ENCODE measurements at regions of chr7 and their contacts with region 1.

Region 1: GRCh38 chr7:88614736-88615135 is 144.8 kb upstream of the ZNF804B start:
- DNase-seq: no peak

Region 2: DNA sequence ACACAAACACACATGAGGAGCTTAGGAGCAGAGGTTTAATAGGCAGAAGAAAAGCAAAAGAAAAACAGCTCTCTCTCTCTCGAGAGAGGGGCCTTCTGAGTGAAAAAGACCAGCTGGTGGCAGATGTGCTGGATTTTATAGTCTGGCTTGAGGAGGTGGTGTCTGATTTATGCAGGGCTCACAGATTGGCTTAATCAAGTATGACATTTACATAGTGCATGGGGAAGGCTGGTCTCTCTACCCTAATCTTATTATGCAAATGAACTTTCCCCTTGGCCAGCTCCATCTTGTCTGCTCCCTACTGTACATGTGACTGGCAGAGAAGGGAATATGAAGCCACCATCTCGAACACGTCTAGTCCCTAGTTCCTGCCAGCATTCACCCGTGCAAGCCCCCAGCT is 74.7 kb before region 1 on chr7:
- intact Hi-C with region 1: loop called in 1 of 2 experiments (anchors 2 kb)
- DNase-seq: no peak

Region 3: DNA sequence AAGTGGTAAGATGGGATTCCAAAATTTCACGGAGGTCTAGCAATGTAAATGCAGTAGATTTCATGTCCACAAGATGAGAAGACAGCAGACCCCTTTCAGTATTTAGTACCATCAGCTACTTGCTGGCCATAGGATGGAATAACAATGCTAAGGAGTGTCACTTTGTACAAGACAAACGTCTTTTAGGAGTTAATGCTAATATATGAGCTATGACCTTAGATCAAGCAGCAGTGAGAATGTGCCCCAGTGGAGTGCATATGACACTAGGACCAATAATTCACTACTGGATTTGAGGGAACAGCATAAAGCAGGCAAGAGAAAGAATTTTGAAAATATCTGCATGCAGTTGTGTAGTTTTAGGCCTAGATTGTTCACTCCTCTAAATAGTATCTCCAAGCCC is 38.0 kb before region 1 on chr7:
- intact Hi-C with region 1: no loop called
- DNase-seq: no peak

Region 4: GRCh38 chr7:88589927-88590326 is 24.8 kb before region 1 on chr7:
- intact Hi-C with region 1: no loop called
- DNase-seq: no peak

Region 5: DNA sequence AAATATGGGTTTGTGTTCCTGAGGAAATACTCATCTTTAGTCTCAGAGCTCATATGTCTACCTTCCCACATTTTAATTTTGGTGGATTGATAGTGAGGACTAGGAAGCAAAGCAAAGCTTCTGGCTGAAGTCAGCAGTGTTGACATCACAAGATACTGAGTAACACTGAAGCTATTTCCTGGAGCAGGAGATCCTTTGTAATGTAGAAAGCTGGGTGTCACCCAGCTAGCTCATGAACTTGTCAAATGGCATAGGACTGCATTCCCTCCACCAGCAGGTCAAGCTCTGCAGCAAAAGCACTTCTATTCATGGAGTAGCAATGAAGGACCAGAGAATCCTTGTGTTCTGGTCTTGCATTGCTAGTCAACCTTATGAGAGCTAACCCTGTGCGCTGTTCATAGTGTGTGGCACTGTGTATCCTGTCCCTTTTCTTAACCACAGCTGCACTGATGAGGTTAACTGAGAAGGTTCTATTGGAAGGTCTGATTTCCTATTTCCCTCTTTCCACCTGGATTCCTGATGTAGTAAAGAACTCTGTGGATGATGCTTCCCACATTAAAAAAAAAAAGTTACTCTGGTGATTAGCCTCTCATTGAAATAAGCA is 50.0 kb after region 1 on chr7:
- intact Hi-C with region 1: no loop called
- DNase-seq: no peak

Region 6: DNA sequence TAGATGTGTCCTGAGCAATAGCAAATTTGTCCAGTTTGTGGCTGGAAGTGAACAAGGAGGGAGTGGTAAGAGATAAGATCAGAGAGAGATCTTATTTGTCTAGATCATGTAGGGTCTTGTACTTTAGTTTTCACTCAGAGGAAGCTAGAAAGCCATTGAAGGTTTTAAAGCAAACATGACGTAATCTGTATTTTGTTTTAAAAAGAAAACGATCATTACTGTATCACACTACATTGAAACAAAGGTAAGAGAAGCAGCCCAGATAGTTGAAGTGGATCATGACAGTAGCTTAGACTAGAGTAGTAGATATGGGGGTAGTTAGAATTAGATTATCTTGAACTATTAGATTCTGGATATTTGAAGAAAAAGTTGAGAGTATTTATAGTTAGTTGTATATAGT is 121.2 kb after region 1 on chr7:
- intact Hi-C with region 1: no loop called
- DNase-seq: no peak